Mammary epithelial cell (primary cell): ENCODE measurements at regions of chr2 and their contacts with region 1.

Region 1: GRCh38 chr2:50492477-50492851 is 539.5 kb downstream of the NRXN1 start:
- DNase-seq: peak; percentile 41
- H3K4me3 ChIP-seq: no peak overlapping the region
- H3K27ac ChIP-seq: no peak overlapping the region
- H3K4me1 ChIP-seq: peaks cover 7% of the 10 kb centered on the region
- H3K27me3 ChIP-seq: no peaks in the 10 kb centered on the region
- CTCF ChIP-seq: peak; percentile 55 to 70

Region 2: DNA sequence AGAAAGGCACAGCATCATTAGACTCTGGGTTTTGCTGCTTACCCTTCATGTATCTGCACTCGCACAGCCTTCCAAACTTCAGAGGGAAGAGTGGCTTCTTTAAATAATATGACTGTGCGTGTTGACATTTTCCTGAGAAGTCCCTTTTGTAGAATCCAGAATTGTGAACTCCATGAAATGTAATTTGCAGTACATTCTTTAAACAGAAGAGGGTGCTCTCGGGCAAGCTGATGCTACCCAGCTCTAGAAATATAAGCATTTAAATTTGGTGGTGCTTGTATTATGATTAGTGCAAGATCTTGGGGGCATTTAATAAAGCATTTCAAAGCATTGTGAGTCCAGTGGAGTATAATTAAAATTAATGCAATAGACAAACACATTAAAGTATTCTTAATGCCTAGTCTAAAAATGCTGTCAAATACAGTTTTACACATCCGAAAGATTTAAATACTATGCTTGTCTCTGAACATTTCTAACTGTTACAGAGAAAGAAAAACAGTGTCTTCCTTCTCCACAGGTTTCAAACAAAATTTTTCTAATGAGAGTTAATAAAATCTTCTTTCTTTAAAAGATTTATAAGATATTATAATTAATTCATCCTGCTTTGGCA is 1892.2 kb before region 1 on chr2:
- CTCF ChIA-PET with region 1: no interaction called
- dilution Hi-C with region 1: no loop called
- in situ Hi-C with region 1: no loop called
- intact Hi-C with region 1: loop called (anchors 5 kb)
- DNase-seq: peak; percentile 32
- H3K4me3 ChIP-seq: no peak overlapping the region
- H3K27ac ChIP-seq: no peak overlapping the region
- H3K4me1 ChIP-seq: no peaks in the 10 kb centered on the region
- H3K27me3 ChIP-seq: no peaks in the 10 kb centered on the region
- CTCF ChIP-seq: peak; percentile 69 to 78

Region 3: DNA sequence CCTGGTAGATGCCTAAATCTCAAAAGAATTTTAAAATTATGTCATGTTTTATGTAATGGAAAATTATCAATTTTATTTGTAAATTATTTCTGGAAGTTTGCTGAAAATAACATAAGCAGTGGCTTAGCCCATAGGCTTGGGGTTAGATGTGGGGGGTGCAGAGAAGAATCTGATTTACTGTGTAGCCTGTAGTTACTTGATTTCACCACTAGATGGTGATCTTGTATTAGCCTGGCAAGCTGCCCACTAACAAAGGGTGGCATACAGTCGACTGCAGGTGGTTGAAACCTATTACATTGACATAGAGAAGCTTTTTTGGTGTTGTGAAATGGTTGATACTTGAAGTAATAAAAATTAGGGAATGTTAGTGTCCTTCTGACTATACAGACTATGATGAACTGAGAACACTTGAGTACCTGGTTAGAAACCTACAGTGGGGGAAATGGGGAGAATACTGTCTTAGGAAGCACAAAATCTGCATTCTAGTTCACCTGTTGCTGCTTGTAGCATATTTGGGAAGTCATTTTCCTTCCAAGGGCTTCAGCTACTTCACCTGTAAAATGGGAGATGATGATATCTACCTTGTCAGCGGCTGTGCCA is 1545.9 kb before region 1 on chr2:
- CTCF ChIA-PET with region 1: no interaction called
- dilution Hi-C with region 1: no loop called
- in situ Hi-C with region 1: no loop called
- intact Hi-C with region 1: loop called (anchors 1 kb)
- DNase-seq: peak; percentile 30
- H3K4me3 ChIP-seq: no peak overlapping the region
- H3K27ac ChIP-seq: no peak overlapping the region
- H3K4me1 ChIP-seq: no peaks in the 10 kb centered on the region
- H3K27me3 ChIP-seq: no peaks in the 10 kb centered on the region
- CTCF ChIP-seq: peak; percentile 78 to 80

Region 4: GRCh38 chr2:49616800-49617199 is 875.7 kb before region 1 on chr2:
- CTCF ChIA-PET with region 1: no interaction called
- dilution Hi-C with region 1: no loop called
- in situ Hi-C with region 1: no loop called
- intact Hi-C with region 1: loop called (anchors 5 kb)
- DNase-seq: peak; percentile 16
- H3K4me3 ChIP-seq: no peak overlapping the region
- H3K27ac ChIP-seq: no peak overlapping the region
- H3K4me1 ChIP-seq: no peaks in the 10 kb centered on the region
- H3K27me3 ChIP-seq: no peaks in the 10 kb centered on the region
- CTCF ChIP-seq: peak; percentile 37 to 59

Region 5: DNA sequence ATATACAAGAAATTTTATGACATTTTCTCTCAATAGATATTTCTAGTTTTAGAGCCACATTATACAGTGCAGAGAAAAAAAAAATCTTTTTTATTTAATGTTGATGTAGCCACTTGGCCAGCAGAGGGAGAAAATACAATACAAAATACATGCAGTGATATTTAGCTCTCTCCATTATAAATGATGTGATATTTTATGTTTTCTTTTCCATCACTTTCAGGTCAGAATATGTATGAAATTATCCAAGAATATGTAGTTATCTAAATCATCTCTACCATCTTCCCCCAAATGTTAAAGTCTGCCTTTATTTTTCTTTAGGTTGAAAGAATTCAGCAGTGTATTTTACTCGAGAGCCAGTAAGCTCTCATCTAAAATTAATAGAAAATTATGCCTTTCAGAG is 804.5 kb before region 1 on chr2:
- CTCF ChIA-PET with region 1: no interaction called
- dilution Hi-C with region 1: no loop called
- in situ Hi-C with region 1: no loop called
- intact Hi-C with region 1: loop called (anchors 5 kb)
- DNase-seq: no peak
- H3K4me3 ChIP-seq: no peak overlapping the region
- H3K27ac ChIP-seq: no peak overlapping the region
- H3K4me1 ChIP-seq: no peaks in the 10 kb centered on the region
- H3K27me3 ChIP-seq: no peaks in the 10 kb centered on the region
- CTCF ChIP-seq: peak; percentile 21 to 40

Region 6: DNA sequence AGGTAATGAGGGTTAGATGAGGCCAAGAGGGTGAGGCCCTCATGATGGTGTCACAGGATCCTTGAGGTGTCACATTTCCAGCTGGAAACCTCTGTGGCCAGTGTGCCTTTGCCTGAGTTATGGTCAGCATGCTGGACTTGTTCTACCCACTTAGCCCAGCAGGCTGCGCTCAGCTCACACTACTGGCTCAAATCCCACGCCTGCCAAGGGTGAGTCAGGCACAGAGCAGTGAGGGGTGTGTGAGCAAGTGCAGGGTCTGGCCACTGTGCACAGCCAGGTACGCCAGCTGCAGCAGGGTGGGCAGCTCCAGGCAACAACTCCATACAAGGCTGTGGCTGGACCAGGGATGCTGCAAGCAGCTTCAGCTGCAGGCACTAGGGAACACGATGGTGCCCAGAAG is 721.5 kb before region 1 on chr2:
- CTCF ChIA-PET with region 1: no interaction called
- dilution Hi-C with region 1: no loop called
- in situ Hi-C with region 1: no loop called
- intact Hi-C with region 1: loop called (anchors 5 kb)
- DNase-seq: peak; percentile 31
- H3K4me3 ChIP-seq: no peak overlapping the region
- H3K27ac ChIP-seq: no peak overlapping the region
- H3K4me1 ChIP-seq: no peaks in the 10 kb centered on the region
- H3K27me3 ChIP-seq: no peaks in the 10 kb centered on the region
- CTCF ChIP-seq: peak; percentile 47 to 65